CD8-positive, alpha-beta T cell (primary cell): ENCODE measurements at regions of chr6 and their contacts with region 1.

Region 1: GRCh38 chr6:5191722-5192121 is 69.0 kb downstream of the LYRM4 start:
- DNase-seq: no peak
- ATAC-seq: no peak
- H3K4me3 ChIP-seq: no peak overlapping the region
- H3K4me3 Mint-ChIP-seq: no peak overlapping the region
- H3K27ac ChIP-seq: no peak overlapping the region
- H3K27ac Mint-ChIP-seq: no peak overlapping the region
- H3K4me1 ChIP-seq: no peaks in the 10 kb centered on the region
- H3K4me1 Mint-ChIP-seq: no peaks in the 10 kb centered on the region
- H3K27me3 ChIP-seq: no peaks in the 10 kb centered on the region
- H3K27me3 Mint-ChIP-seq: no peaks in the 10 kb centered on the region
- CTCF ChIP-seq: no peak

Region 2: DNA sequence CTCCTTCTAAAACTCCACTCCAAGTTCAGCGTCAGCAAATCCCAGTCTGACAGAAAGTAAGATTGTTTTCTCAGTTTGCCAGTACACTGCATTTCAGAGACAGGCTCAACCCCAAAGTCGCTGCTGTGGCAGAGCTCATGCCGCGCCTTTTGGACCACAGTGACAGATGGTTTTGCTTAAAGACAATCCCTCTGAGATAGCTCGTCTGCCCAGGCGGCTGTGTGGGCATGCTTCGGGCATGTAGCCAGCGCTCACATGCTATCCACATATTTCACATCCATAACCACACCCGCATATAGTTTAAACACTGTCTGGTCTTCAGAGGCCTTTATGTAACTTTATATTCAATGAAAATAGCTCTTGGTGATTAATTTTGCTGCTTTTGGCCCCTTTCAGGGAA is 1425.5 kb before region 1 on chr6:
- CTCF ChIA-PET with region 1: no interaction called
- POLR2A ChIA-PET with region 1: no interaction called
- intact Hi-C with region 1: no loop called
- DNase-seq: no peak
- ATAC-seq: no peak
- H3K4me3 ChIP-seq: no peak overlapping the region
- H3K4me3 Mint-ChIP-seq: no peak overlapping the region
- H3K27ac ChIP-seq: no peak overlapping the region
- H3K27ac Mint-ChIP-seq: no peak overlapping the region
- H3K4me1 ChIP-seq: no peaks in the 10 kb centered on the region
- H3K4me1 Mint-ChIP-seq: no peaks in the 10 kb centered on the region
- H3K27me3 ChIP-seq: peaks cover 0 to 4% of the 10 kb centered on the region in 2 experiments
- H3K27me3 Mint-ChIP-seq: peaks cover 22% of the 10 kb centered on the region
- CTCF ChIP-seq: no peak

Region 3: GRCh38 chr6:5174244-5174643 is 17.5 kb before region 1 on chr6:
- CTCF ChIA-PET with region 1: no interaction called
- POLR2A ChIA-PET with region 1: interaction called, 7 read pairs
- intact Hi-C with region 1: loop called in 1 of 2 experiments (anchors 2 kb)
- DNase-seq: peak; percentile 13 to 85 (median 56)
- ATAC-seq: peak; percentile 87
- H3K4me3 ChIP-seq: peak overlapping the region; percentile 30 to 48
- H3K4me3 Mint-ChIP-seq: peak overlapping the region; percentile 68
- H3K27ac ChIP-seq: peak overlapping the region; percentile 66 to 91
- H3K27ac Mint-ChIP-seq: peak overlapping the region; percentile 89
- H3K4me1 ChIP-seq: peaks cover 45% of the 10 kb centered on the region
- H3K4me1 Mint-ChIP-seq: peaks cover 56% of the 10 kb centered on the region
- H3K27me3 ChIP-seq: no peaks in the 10 kb centered on the region
- H3K27me3 Mint-ChIP-seq: no peaks in the 10 kb centered on the region
- CTCF ChIP-seq: no peak

Region 4: GRCh38 chr6:5234874-5235273 is 43.2 kb after region 1 on chr6:
- CTCF ChIA-PET with region 1: no interaction called
- POLR2A ChIA-PET with region 1: no interaction called
- intact Hi-C with region 1: no loop called
- DNase-seq: no peak
- ATAC-seq: no peak
- H3K4me3 ChIP-seq: no peak overlapping the region
- H3K4me3 Mint-ChIP-seq: no peak overlapping the region
- H3K27ac ChIP-seq: no peak overlapping the region
- H3K27ac Mint-ChIP-seq: no peak overlapping the region
- H3K4me1 ChIP-seq: no peaks in the 10 kb centered on the region
- H3K4me1 Mint-ChIP-seq: no peaks in the 10 kb centered on the region
- H3K27me3 ChIP-seq: no peaks in the 10 kb centered on the region
- H3K27me3 Mint-ChIP-seq: no peaks in the 10 kb centered on the region
- CTCF ChIP-seq: no peak